Heart right ventricle (tissue), 16 donors: ENCODE measurements at regions of chr15 and their contacts with region 1.

Region 1: DNA sequence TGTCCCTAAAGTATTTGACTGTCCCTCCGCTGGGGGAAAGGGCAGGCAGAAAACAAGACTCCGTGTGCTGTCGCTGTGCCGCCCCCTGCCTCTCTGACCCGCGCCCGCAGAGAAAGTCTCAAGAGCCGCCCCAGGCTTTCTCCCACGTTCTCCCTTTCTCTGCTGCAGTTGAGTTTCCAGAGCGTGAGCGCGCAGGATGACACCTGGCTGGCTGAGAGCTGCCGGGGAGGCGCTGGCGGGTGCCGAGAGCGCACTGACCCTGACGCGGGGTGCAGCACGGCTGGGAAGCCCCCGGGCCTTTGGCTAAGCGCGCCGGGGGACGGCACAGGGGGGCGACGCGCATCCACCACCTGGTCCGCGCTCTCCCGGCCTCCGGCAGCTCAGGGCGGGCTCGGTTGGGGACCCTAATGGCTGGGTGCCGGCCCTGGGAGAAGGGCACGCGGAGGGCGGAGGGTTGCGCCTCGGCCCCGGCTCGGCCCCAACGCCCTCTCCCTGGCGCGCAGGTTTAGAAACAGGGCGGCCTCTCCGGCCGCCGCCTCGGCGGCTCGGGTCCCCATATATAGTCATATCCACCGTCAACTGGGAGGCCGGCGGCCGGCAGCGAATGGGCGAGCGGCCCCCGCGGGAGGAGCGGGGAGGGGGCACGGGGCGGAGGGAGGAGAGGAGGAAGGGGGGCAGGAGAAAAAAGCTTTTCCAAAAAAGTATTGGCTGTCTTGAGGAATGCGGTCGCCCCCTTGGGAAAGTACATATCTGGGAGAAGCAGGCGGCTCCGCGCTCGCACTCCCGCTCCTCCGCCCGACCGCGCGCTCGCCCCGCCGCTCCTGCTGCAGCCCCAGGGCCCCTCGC is at the start of gene TPM1:
- DNase-seq: peak; percentile 88 to 89
- ATAC-seq: peak; percentile 76 to 86 (median 84)
- H3K4me3 ChIP-seq: peak within 1 kb of the TSS; percentile 66 to 92 (median 80)
- H3K27ac ChIP-seq: peak within 1 kb of the TSS; percentile 90 to 100 (median 98)
- H3K4me1 ChIP-seq: peaks cover 0 to 41% (median 13%) of the 10 kb centered on the region in 9 donors
- H3K27me3 ChIP-seq: peaks cover 0 to 80% (median 0%) of the 10 kb centered on the region in 7 donors
- CTCF ChIP-seq: peak in 4 of 9 donors; percentile 8 to 38 (median 30)
- total RNA-seq, gene TPM1: 11,955 to 17,571 (median 14,403) TPM

Region 2: DNA sequence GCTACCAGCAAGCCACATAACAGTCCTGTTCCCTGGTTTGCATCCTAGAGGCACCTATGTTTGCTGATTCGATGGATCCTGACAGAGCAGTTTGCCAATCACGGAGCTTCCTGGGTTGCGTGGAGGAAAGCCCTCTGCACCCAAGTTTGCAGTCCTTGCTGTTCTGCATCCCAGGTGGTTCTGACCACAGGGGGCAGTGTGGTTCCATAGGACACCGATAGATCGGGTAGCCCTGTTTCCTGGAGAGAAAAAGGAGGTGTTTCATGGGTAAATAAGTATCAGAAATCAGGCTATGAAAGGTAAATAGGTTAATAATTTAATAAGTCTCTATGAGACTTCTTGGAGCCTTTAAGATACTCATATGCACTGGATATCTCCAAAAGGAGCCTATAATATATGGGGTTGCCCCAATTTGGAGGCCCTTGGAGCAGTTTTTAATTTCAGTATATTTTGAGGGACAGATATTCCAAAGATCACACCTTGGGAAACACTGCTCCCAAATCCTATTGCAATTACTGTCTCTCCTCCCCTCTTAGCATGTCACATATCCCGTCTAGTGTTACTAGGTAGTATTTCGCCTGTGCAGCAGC is 194.2 kb before region 1 on chr15:
- intact Hi-C with region 1: loop called in 8 of 10 experiments (anchors 5 to 10 kb)
- DNase-seq: peak; percentile 74
- ATAC-seq: peak; percentile 57 to 82 (median 75)
- H3K4me3 ChIP-seq: no peak overlapping the region
- H3K27ac ChIP-seq: peak overlapping the region in 5 of 10 donors; percentile 11 to 30 (median 21)
- H3K4me1 ChIP-seq: peaks cover 0 to 49% (median 22%) of the 10 kb centered on the region in 9 donors
- H3K27me3 ChIP-seq: no peaks in the 10 kb centered on the region
- CTCF ChIP-seq: peak; percentile 64 to 87 (median 80)

Region 3: DNA sequence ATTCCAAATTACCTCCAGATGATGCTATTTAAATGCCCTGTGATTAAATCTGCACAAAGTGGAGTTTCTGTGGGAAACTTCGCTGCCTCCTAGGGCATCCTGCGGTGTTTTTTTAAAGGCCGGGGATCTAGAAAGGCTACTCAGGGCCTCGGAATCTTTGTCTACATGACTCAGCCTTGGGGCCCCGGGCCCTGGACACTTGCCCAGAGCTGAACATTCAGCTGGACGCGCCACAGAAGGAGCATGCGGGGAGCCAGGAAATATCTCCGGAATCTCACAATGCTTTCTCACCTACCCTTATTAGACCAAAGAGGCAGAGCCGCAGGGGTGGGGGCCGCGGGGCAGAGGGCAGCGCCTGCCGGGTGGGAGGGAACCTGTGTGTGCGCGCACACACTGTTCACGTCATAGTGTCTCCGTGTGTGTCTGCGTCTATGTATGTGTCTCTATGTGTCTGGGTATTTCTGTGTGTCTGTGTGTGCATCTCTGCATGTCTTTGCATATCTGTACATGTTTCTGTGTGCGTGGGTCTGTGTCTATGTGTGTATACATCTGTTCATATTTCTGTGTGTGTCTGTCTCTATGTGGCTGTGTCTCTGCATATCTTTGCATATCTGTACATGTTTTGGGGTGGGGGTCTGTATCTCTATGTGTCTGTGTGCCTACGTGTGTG is 145.1 kb before region 1 on chr15:
- intact Hi-C with region 1: loop called in 4 of 10 experiments (anchors 2 to 5 kb)
- DNase-seq: peak; percentile 89 to 93
- ATAC-seq: peak; percentile 81 to 91 (median 86)
- H3K4me3 ChIP-seq: peak overlapping the region in 5 of 10 donors; percentile 5 to 21 (median 16)
- H3K27ac ChIP-seq: peak overlapping the region; percentile 66 to 93 (median 88)
- H3K4me1 ChIP-seq: peaks cover 10 to 76% (median 59%) of the 10 kb centered on the region in 9 donors
- H3K27me3 ChIP-seq: no peaks in the 10 kb centered on the region
- CTCF ChIP-seq: no peak

Region 4: GRCh38 chr15:62940755-62941361 is 101.3 kb before region 1 on chr15:
- intact Hi-C with region 1: loop called in 2 of 10 experiments (anchors 5 to 10 kb)
- DNase-seq: peak; percentile 79 to 85
- ATAC-seq: peak; percentile 91 to 97 (median 94)
- H3K4me3 ChIP-seq: no peak overlapping the region
- H3K27ac ChIP-seq: peak overlapping the region; percentile 79 to 93 (median 84)
- H3K4me1 ChIP-seq: peaks cover 4 to 33% (median 25%) of the 10 kb centered on the region in 9 donors
- H3K27me3 ChIP-seq: no peaks in the 10 kb centered on the region
- CTCF ChIP-seq: no peak

Region 5: DNA sequence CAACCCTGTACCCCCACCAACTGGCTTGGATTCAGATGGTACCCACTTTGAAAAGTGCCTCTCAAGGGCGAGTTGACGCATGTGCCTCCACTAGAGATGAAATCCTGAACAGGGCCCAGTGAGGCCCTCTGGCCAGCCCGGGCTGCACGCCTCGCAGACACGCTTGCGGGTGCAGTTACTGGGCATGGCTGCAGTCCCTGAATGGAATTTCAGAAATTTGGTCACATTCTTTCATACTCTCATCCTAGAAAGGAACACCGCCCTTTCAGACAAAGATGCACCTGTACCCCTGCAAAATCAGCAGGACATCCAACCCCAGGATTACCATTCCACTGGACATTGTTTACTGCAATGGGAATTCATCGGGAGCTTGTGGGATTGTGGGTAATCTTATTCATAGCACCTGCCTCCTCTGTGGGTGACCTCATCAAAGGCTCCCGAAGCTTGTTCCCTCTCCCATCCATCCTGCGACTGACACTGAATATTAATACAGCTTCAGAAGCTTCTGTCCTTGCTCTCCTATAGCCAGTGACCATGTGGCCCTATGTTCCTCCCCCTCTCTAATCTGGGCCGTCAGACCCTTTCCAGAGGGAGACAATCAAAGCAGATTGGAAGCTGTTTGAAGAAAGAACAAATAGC is 42.2 kb before region 1 on chr15:
- intact Hi-C with region 1: loop called in 3 of 10 experiments (anchors 2 to 5 kb)
- DNase-seq: peak in 1 of 2 donors; percentile 28
- ATAC-seq: peak; percentile 32 to 81 (median 70)
- H3K4me3 ChIP-seq: no peak overlapping the region
- H3K27ac ChIP-seq: peak overlapping the region; percentile 18 to 88 (median 77)
- H3K4me1 ChIP-seq: peaks cover 0 to 28% (median 10%) of the 10 kb centered on the region in 9 donors
- H3K27me3 ChIP-seq: no peaks in the 10 kb centered on the region
- CTCF ChIP-seq: no peak

Region 6: GRCh38 chr15:63006032-63006878 is 35.9 kb before region 1 on chr15:
- intact Hi-C with region 1: loop called in 3 of 10 experiments (anchors 2 to 5 kb)
- DNase-seq: no peak
- ATAC-seq: peak in 6 of 8 donors; percentile 49 to 81 (median 66)
- H3K4me3 ChIP-seq: no peak overlapping the region
- H3K27ac ChIP-seq: no peak overlapping the region
- H3K4me1 ChIP-seq: peaks cover 0 to 7% (median 0%) of the 10 kb centered on the region in 9 donors
- H3K27me3 ChIP-seq: no peaks in the 10 kb centered on the region
- CTCF ChIP-seq: no peak